MCF 10A (cell line): ENCODE measurements at regions of chr3 and their contacts with region 1.

Region 1: DNA sequence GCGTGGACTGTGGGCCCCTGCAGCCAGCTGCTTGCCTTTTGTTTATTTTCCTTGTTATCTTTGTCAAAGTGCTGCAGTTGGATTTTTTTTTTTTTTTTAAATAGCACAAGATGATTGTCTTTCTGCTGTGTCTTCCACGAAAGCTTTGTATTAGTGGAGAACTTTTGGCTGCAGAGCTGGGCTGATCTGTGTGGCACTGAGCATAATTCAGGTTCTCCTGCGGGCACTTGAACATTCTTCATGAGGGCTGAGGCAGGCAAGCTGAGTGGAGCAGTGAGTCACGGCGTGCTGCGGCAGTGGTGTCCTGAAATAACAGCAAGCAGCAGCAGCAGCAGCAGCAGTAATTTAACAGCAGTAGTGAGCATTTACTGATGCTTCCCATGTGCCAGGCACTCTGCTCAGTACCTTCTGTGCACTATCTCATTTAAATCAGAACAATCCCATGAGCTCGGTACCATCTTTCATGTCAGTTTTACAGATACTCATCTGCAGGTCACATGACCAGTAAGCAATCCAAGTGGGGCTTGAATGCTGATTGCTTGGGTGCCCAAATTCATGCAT is 45.8 kb downstream of the MITF start:
- DNase-seq: peak; percentile 74
- H3K4me3 Mint-ChIP-seq: no peak overlapping the region
- H3K27ac Mint-ChIP-seq: no peak overlapping the region
- H3K4me1 Mint-ChIP-seq: peaks cover 30% of the 10 kb centered on the region
- H3K27me3 Mint-ChIP-seq: no peaks in the 10 kb centered on the region
- CTCF ChIP-seq: no peak

Region 2: DNA sequence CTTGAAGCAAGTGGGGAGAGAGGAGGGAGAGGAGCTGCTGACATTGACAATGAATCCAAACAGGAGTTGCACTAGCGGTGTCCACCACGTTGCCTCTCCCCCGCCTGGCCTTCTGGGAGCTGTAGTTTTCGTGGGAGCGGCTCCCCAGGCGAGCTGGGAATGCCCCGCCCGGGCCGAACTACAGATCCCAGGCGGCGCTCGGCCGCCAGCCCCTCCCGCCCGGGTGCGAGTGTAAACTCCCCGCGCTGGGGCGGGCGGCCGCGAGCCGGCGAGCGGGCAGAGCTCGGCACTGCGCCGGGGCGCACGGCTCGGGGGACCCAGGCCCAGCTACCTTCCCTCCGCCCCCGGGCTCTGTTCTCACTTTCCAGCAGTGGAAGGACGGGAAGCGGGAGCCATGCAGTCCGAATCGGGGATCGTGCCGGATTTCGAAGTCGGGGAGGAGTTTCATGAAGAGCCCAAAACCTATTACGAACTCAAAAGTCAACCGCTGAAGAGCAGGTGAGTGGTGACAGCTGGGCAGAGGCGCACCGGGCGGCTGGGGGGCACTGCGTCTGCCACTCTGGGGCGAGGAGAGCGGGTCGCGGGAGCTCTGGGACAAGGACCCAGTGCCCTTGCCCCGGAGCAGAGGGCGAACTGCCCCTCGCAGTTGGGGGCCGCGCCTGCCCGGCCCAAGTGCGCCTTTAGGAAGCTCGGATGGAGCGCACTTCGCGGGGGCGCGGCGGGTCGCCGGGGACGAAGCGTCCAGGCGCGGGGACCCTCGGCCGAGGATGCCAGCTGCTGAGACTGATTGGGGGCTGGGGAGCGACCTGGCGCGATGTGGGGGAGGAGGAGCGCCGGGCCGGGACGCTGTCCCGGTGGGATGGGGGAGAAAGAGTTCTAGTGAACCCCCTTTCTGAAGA is 45.6 kb before region 1 on chr3 and contains the start of gene MITF:
- CTCF ChIA-PET with region 1: interaction called, 3 read pairs
- POLR2A ChIA-PET with region 1: interaction called, 25 read pairs
- intact Hi-C with region 1: no loop called
- DNase-seq: peak; percentile 93
- H3K4me3 Mint-ChIP-seq: peak within 1 kb of the TSS; percentile 75
- H3K27ac Mint-ChIP-seq: peak within 1 kb of the TSS; percentile 70
- H3K4me1 Mint-ChIP-seq: peaks cover 13% of the 10 kb centered on the region
- H3K27me3 Mint-ChIP-seq: peaks cover 16% of the 10 kb centered on the region
- CTCF ChIP-seq: no peak
- total RNA-seq, gene MITF: 7.4 and 16.1 TPM in 2 replicates

Region 3: DNA sequence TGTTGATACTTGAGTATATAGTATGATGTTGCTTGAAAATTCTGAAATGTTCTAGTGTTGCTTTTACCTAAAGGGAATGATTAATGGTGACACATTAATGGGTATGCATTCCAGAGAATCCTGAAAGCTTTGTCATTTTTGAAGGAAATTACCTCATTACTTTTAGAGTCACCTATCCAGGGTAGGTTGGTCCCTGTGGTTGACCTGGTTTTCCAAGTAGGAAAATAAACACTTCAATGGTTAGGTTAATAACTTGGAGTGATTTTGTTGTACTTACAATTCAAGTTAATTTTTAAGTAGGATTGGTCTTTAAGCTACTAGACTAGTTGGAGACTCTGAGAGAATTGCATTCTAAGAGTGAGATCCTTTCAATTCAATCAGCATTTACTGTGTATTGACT is 14.8 kb before region 1 on chr3:
- CTCF ChIA-PET with region 1: no interaction called
- POLR2A ChIA-PET with region 1: interaction called, 8 read pairs
- intact Hi-C with region 1: loop called (anchors 2 kb)
- DNase-seq: peak; percentile 38
- H3K4me3 Mint-ChIP-seq: no peak overlapping the region
- H3K27ac Mint-ChIP-seq: peak overlapping the region; percentile 76
- H3K4me1 Mint-ChIP-seq: peaks cover 61% of the 10 kb centered on the region
- H3K27me3 Mint-ChIP-seq: no peaks in the 10 kb centered on the region
- CTCF ChIP-seq: no peak